Cardiac septum (tissue), 1 donor: ENCODE measurements at regions of chr13 and their contacts with region 1.

Region 1: GRCh38 chr13:111281751-111282311 is 38.6 kb upstream of the TEX29 start:
- DNase-seq: no peak

Region 2: DNA sequence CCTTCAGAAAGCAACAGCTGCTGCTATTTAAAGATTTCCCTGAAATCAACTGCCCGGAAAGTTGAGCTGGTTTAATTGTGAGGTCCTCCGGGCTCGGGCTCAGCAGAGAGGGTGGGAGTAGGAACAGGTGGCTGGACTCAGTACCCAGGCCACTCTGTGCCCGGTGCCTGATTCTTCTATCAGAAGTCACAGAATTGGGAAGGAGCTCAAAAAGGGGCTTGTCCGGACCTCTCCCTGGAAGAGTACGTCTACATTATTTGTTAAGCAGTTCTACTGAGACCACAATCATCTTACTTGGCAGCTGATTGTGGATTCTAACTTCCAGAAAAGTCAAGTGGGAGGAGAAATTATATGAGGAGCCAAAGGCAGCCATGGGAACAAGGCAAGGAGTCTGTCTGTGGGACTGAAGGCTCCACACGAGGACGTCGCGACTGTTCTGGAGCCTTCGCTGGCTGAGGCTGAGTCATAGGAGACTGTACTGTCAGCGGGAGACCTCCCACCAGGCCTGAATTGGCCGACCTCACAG is 275.3 kb before region 1 on chr13:
- intact Hi-C with region 1: no loop called
- DNase-seq: peak; percentile 90

Region 3: DNA sequence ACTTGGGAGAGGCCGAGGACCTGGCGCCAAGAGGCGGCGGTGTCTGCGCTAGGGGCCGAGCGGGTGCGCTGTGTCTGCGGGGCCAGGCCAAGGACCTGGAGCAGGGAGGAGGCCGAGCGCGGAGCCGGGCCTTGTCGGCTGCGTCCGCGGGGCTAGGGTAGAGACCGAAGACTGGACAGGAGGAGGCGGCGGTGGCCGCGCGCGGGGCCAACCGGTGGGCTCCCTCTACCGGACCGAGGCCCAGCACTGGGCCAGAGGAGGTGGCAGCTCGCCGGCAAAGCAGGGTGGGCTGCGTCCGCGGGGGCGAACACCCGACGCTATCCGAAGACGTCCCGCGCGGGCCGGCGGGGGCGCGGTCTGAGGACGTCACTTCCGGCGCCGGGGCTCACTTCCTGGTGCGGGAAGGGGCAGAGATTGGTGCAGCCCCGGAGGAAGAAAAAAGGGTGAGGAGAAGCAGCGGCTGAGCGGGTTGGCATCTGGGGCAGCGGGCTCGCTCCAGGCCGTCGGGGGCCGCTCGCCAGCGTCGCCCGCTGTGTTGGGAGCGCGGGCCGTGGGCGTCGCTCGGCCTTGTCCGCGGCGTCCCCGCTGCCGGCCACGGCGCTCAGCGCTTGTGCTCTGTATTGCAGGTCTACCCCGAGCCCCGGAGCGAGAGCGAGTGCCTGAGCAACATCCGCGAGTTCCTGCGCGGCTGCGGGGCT is 128.4 kb before region 1 on chr13:
- intact Hi-C with region 1: loop called (anchors 5 kb)
- DNase-seq: peak; percentile 96

Region 4: GRCh38 chr13:111247562-111247961 is 34.3 kb before region 1 on chr13:
- intact Hi-C with region 1: loop called (anchors 5 kb)
- DNase-seq: no peak